Activated CD4-positive, alpha-beta T cell treated with anti-CD3 and anti-CD28 coated beads for 36 hours (primary cell): ENCODE measurements at regions of chr3 and their contacts with region 1.

Region 1: GRCh38 chr3:14203521-14204079 is 25.0 kb downstream of the LSM3 start:
- DNase-seq: peak; percentile 56
- ATAC-seq: peak; percentile 60
- H3K4me3 Mint-ChIP-seq: no peak overlapping the region
- H3K27ac Mint-ChIP-seq: no peak overlapping the region
- H3K4me1 Mint-ChIP-seq: peaks cover 2% of the 10 kb centered on the region
- H3K27me3 Mint-ChIP-seq: no peaks in the 10 kb centered on the region

Region 2: GRCh38 chr3:14467814-14468620 is 264.4 kb after region 1 on chr3:
- CTCF ChIA-PET with region 1: interaction called, 7 read pairs
- POLR2A ChIA-PET with region 1: no interaction called
- intact Hi-C with region 1: loop called (anchors 1 kb)
- DNase-seq: peak; percentile 58
- ATAC-seq: peak; percentile 28
- H3K4me3 Mint-ChIP-seq: no peak overlapping the region
- H3K27ac Mint-ChIP-seq: no peak overlapping the region
- H3K4me1 Mint-ChIP-seq: peaks cover 6% of the 10 kb centered on the region
- H3K27me3 Mint-ChIP-seq: no peaks in the 10 kb centered on the region

Region 3: DNA sequence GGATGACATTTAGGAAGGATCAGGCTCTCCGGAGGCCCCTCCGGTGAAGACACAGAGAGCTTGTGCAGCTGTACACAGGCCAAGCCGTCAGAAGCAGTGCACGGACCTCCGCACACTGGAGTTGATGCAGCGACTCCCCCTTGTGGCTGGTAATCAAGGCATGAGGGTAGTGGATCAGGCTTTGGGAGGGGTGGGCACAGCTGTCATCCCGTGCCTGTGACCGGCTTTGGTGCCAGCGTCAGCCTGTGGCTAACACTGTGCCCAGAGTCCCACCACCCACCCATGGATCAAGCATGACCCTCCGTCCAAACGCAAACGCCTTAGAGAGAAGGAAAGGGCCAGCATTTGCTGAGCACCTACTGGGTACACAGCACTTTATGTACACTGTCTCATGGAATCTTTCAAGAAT is 344.7 kb after region 1 on chr3:
- CTCF ChIA-PET with region 1: interaction called, 4 read pairs
- POLR2A ChIA-PET with region 1: no interaction called
- intact Hi-C with region 1: loop called in 1 of 2 experiments (anchors 2 kb)
- DNase-seq: peak; percentile 69
- ATAC-seq: peak; percentile 82
- H3K4me3 Mint-ChIP-seq: no peak overlapping the region
- H3K27ac Mint-ChIP-seq: no peak overlapping the region
- H3K4me1 Mint-ChIP-seq: no peaks in the 10 kb centered on the region
- H3K27me3 Mint-ChIP-seq: peaks cover 15% of the 10 kb centered on the region

Region 4: DNA sequence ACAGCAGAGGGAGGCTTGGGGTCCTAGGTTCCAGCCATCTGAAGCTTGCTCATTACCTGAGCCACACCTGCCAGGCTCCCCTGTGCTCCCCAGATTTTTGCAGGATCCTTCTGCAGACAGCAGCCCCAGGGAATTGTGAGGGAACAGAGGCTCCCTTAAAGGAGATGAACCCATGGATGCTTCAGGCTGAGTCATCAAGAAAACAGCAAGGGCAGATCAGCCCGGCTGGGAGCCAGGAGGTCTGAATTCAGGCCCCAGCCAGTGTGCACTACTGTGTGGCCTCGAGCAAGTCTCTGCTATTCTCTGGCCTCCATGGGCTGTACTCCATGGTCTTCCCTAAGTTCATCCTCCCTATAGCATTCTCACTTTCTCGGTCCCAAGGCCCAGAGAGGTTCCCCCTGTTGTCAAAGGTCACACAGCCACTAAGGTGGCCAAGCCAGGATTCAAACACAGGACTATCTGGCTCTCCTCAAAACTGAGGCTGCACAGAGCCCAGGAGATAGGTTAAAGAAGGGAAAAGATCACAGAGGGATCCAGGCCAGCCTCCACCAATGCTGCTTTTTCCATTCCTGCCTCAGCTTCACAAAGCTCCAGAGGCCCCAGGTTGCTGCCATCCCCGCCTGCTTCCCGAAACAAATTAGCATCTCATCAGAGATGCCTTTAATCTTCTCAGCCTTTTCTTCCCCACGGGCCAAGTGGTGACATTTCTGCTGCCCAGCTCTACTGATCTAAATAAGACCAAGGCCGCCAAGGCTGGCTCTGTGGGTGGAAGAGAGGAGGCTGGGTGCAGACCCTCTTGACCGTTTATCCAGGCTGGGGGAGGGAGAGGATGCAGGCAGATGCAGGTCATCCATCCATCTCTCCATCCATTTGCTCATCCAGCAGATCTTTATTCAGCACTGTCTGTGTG is 357.7 kb after region 1 on chr3:
- CTCF ChIA-PET with region 1: no interaction called
- POLR2A ChIA-PET with region 1: no interaction called
- intact Hi-C with region 1: no loop called
- DNase-seq: no peak
- ATAC-seq: no peak
- H3K4me3 Mint-ChIP-seq: no peak overlapping the region
- H3K27ac Mint-ChIP-seq: no peak overlapping the region
- H3K4me1 Mint-ChIP-seq: no peaks in the 10 kb centered on the region
- H3K27me3 Mint-ChIP-seq: peaks cover 1% of the 10 kb centered on the region